Activated CD4-positive, alpha-beta T cell treated with anti-CD3 and anti-CD28 coated beads, Interleukin-2, amount 10 ng/mL, durations not matched to agents 24 days and 14 days (primary cell): ENCODE measurements at regions of chr17 and their contacts with region 1.

Region 1: DNA sequence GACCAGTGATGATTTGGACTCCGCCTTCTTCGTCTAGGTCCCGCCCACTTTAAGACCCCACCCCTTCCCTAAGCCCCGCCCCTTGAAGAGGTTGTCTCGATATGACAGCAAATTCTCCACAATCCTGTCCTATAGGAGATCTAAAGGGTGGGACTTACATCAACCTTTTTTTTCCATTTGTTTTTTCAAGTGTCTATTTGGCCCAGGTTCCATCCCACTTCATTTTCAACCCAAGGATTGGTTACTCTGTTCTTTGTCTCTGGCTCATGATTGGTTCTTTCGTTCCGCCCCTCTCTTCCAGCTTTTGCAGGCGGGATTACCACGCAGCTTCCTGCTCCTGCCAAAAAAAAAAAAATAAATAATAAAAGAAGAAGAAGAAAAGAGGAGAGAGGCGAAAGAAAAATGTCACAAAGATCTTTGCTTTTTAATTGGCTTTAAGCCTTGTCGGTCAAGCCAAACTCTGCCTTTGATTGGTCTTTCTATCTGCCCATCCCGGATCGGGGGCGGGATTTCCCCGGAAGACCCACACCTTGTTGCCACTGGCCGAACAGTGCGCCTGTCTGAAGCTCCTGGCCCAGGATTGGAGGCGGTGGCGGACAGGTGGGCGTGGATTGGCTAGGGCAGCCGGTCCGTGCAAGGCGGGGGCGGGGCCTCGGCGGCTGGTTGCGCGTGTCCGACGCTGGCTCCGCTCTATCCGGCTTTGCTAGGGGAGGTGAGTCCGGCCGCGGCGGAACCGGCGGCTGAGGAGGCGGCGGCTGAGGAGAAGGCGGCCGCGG is 1.2 kb upstream of the NLK start:
- DNase-seq: peak; percentile 100
- H3K4me3 Mint-ChIP-seq: peak overlapping the region; percentile 88
- H3K27ac Mint-ChIP-seq: peak overlapping the region; percentile 87
- H3K4me1 Mint-ChIP-seq: peaks cover 48% of the 10 kb centered on the region
- H3K27me3 Mint-ChIP-seq: peaks cover 9% of the 10 kb centered on the region

Region 2: DNA sequence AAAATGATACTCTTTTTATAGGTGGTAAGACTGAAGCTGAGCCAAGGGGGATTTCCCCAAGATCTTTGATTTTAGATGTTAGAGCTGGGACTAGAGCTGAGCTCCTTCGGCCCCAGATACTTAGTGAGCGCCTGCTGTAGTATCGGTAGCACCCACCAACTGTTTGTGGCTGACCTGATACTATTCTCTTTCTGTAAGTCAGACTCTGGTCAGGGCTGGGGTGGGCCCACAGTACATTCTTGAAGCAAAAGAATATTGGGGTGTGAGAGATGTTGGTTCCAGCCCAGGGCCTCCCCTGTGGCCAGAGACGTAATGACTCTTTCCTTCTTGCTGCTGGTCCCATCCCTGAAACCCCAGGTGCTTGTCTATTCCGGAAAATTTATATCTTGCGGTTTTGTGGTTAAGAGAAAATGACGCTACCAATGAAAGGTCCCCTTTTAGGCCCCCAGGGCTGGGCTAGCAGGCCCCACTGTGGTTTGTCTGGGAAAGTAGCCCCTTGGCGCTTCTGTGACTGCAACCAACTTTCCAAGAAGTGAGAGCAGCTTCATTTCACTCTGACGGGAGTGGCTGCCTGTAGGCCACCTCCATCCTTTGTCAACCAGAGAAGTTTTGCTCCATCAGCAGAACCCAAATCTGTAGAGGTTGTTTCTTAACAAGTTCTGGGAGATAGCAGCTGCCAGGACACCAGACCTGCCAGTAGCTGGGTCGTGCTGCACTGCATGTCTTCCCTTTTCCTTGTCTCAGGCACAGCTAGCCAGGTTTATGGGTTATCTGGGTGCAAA is 496.7 kb before region 1 on chr17:
- intact Hi-C with region 1: loop called (anchors 10 kb)
- DNase-seq: peak; percentile 91
- H3K4me3 Mint-ChIP-seq: peak overlapping the region; percentile 58
- H3K27ac Mint-ChIP-seq: peak overlapping the region; percentile 87
- H3K4me1 Mint-ChIP-seq: peaks cover 77% of the 10 kb centered on the region
- H3K27me3 Mint-ChIP-seq: peaks cover 3% of the 10 kb centered on the region

Region 3: GRCh38 chr17:27846042-27846655 is 195.1 kb before region 1 on chr17:
- intact Hi-C with region 1: no loop called
- DNase-seq: peak; percentile 82
- H3K4me3 Mint-ChIP-seq: peak overlapping the region; percentile 67
- H3K27ac Mint-ChIP-seq: peak overlapping the region; percentile 82
- H3K4me1 Mint-ChIP-seq: peaks cover 20% of the 10 kb centered on the region
- H3K27me3 Mint-ChIP-seq: peaks cover 8% of the 10 kb centered on the region

Region 4: GRCh38 chr17:27892866-27893769 is 148.1 kb before region 1 on chr17 and contains the start of gene LYRM9:
- intact Hi-C with region 1: loop called (anchors 5 kb)
- DNase-seq: peak; percentile 99
- H3K4me3 Mint-ChIP-seq: peak within 1 kb of the TSS; percentile 83
- H3K27ac Mint-ChIP-seq: peak within 1 kb of the TSS; percentile 70
- H3K4me1 Mint-ChIP-seq: peaks cover 21% of the 10 kb centered on the region
- H3K27me3 Mint-ChIP-seq: peaks cover 29% of the 10 kb centered on the region
- total RNA-seq, gene LYRM9: 2.4 TPM in 2 replicates

Region 5: DNA sequence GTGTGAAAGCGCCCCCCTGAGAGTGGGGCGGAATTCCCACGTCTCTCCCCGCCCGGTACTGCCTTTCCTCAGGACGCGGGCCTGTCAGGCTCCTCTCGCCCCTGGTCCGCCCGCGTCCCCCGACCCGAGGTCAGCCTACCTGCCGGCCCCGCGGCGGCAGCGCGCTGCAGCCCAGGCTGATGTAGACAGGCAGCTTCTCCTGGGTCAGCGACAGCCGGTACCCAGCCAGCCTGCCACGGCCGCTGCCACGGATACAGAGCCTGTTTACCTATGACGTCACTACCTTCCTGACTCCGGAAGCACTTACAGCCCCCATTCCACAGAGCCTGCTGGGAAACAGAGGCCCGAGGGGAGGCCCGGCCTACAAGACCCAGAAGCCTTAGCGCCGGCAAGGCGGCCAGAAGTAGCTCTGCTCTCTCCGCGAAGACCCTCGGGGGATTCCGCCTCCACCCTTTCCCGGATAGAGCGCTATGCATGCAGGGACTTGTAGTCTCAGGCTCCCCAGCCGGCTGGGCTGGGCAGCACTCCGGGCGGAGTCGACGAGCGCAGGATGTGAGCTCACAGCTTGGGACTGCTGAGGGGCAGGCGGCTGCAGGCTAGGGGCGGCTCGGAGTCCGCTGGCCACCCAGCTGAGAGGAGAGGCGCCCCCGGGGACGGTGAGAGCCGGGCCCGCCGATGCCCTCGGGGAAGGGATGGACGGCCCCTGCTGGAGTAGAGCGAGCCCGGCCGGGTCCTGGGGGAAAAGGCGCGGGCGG is 294.1 kb after region 1 on chr17 and contains the starts of genes IFT20 and TNFAIP1:
- intact Hi-C with region 1: loop called (anchors 1 kb)
- DNase-seq: peak; percentile 99
- H3K4me3 Mint-ChIP-seq: peak within 1 kb of the TSS; percentile 97
- H3K27ac Mint-ChIP-seq: peak within 1 kb of the TSS; percentile 96
- H3K4me1 Mint-ChIP-seq: peaks cover 34% of the 10 kb centered on the region
- H3K27me3 Mint-ChIP-seq: no peaks in the 10 kb centered on the region
- total RNA-seq, gene IFT20: 21.1 and 24.7 TPM in 2 replicates
- total RNA-seq, gene TNFAIP1: 30.8 and 32.7 TPM in 2 replicates

Region 6: GRCh38 chr17:28365487-28365886 is 324.2 kb after region 1 on chr17:
- intact Hi-C with region 1: no loop called
- DNase-seq: no peak
- H3K4me3 Mint-ChIP-seq: no peak overlapping the region
- H3K27ac Mint-ChIP-seq: no peak overlapping the region
- H3K4me1 Mint-ChIP-seq: peaks cover 4% of the 10 kb centered on the region
- H3K27me3 Mint-ChIP-seq: no peaks in the 10 kb centered on the region